ENCODE measurements at regions of chr5 and their contacts with region 1.

Region 1: DNA sequence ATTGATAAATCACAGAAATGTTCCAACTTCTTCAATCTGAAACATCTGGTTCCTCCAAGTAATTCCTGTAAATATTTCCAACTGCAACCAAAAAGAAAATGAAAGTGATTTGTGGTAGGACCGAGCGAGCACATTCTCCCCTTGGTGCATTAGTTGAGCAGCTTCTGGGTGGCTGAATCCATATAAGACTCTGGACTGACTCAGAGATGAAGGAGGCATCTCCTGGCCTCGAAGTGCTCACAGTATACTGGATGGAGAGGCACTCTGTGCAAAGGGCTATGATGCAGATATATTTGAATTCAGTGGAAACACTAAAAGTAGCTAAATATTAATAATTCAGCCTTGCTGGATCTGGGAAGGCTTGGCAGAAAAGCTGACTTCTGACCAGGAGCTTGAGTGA is 265.0 kb downstream of the MARCHF11 start:
- DNase-seq: no peak
- H3K4me3 ChIP-seq: no peak overlapping the region
- H3K27ac ChIP-seq: no peak overlapping the region
- H3K4me1 ChIP-seq: no peaks in the 10 kb centered on the region
- H3K27me3 ChIP-seq: no peaks in the 10 kb centered on the region
- CTCF ChIP-seq: no peak

Region 2: DNA sequence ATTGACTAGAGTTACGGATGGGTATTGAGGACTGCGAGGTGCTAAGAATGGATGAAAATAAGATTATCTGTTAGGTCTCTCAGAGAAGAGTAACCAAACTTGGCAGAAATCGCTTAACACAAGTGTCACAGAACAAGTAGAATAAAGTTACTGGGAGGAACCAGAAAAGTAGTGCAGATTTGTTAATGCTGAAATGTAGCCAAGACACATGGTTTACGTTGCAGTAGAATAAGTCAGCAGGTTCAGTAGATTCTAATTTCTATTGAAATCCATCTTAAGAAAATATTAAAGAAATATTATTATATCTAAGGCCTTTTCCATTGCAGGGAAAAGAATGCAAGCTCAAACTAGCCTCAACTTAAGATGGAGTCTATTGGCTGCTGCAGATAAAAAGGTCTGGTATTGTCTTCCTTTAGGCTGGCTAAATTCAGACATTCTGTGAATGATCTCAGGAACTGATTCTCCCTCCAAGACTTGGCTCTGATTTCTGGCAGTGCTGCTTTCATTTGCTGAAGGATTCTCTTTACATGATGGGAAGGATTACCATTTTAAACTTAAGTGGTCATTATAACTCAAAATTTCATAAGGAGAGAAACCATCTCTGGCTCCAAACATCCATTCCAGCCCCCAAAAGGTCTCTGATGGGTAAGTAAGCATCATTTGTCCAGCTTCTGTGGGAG is 50.0 kb before region 1 on chr5:
- CTCF ChIA-PET with region 1: no interaction called
- POLR2A ChIA-PET with region 1: interaction called, 11 read pairs
- intact Hi-C with region 1: no loop called
- DNase-seq: no peak
- H3K4me3 ChIP-seq: no peak overlapping the region
- H3K27ac ChIP-seq: no peak overlapping the region
- H3K4me1 ChIP-seq: no peaks in the 10 kb centered on the region
- H3K27me3 ChIP-seq: no peaks in the 10 kb centered on the region
- CTCF ChIP-seq: no peak

Region 3: GRCh38 chr5:16037121-16037845 is 122.6 kb after region 1 on chr5:
- CTCF ChIA-PET with region 1: no interaction called
- POLR2A ChIA-PET with region 1: no interaction called
- intact Hi-C with region 1: no loop called
- DNase-seq: no peak
- H3K4me3 ChIP-seq: no peak overlapping the region
- H3K27ac ChIP-seq: no peak overlapping the region
- H3K4me1 ChIP-seq: no peaks in the 10 kb centered on the region
- H3K27me3 ChIP-seq: no peaks in the 10 kb centered on the region
- CTCF ChIP-seq: no peak

Measured in A673 (cell line).